ENCODE measurements at regions of chr17 and their contacts with region 1.

Region 1: GRCh38 chr17:42221937-42222745 is 27.8 kb upstream of the GHDC start:
- DNase-seq: peak; percentile 78 to 90 (median 86)
- H3K4me3 ChIP-seq: no peak overlapping the region
- H3K27ac ChIP-seq: no peak overlapping the region
- H3K4me1 ChIP-seq: peaks cover 0 to 22% (median 3%) of the 10 kb centered on the region in 4 experiments
- H3K27me3 ChIP-seq: no peaks in the 10 kb centered on the region

Region 2: GRCh38 chr17:41937970-41938954 is 283.9 kb before region 1 on chr17:
- CTCF ChIA-PET with region 1: no interaction called
- POLR2A ChIA-PET with region 1: no interaction called
- DNase-seq: peak; percentile 50 to 85 (median 66)
- H3K4me3 ChIP-seq: no peak overlapping the region
- H3K27ac ChIP-seq: no peak overlapping the region
- H3K4me1 ChIP-seq: peaks cover 0 to 6% (median 1%) of the 10 kb centered on the region in 4 experiments
- H3K27me3 ChIP-seq: no peaks in the 10 kb centered on the region

Region 3: DNA sequence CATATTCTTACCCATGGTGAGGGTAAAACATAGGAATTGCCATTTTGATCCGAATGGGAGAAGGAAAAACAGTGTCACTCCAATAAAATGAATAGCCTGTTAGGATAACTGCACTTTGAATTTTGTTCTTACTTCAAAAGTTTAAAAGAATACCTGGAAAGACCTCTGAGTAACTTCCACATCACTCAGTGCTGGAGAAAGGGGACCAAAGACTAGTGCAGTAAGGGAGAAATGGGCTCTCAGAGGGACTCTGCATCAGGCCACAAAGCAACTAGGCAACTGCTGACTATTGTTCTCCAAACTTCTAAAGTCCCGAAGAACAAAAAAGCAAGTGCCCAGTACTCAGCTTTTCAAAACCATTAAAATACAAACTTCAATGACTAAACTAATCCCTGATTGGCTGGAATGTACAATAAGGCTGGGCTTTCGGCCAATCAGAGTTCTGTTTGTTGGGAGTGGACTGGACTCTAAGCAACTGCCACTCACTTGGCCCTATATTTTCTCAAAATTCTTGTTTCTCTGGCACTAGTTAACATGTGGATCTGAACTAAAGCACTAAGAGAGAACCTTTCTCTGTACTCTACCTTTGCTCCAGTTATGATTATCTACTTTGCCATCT is 211.1 kb before region 1 on chr17:
- CTCF ChIA-PET with region 1: no interaction called
- POLR2A ChIA-PET with region 1: no interaction called
- DNase-seq: peak in 2 of 3 donors; percentile 33 to 39
- H3K4me3 ChIP-seq: no peak overlapping the region
- H3K27ac ChIP-seq: peak overlapping the region in 1 of 2 experiments; percentile 12
- H3K4me1 ChIP-seq: peaks cover 3 to 17% (median 10%) of the 10 kb centered on the region in 4 experiments
- H3K27me3 ChIP-seq: no peaks in the 10 kb centered on the region

Region 4: DNA sequence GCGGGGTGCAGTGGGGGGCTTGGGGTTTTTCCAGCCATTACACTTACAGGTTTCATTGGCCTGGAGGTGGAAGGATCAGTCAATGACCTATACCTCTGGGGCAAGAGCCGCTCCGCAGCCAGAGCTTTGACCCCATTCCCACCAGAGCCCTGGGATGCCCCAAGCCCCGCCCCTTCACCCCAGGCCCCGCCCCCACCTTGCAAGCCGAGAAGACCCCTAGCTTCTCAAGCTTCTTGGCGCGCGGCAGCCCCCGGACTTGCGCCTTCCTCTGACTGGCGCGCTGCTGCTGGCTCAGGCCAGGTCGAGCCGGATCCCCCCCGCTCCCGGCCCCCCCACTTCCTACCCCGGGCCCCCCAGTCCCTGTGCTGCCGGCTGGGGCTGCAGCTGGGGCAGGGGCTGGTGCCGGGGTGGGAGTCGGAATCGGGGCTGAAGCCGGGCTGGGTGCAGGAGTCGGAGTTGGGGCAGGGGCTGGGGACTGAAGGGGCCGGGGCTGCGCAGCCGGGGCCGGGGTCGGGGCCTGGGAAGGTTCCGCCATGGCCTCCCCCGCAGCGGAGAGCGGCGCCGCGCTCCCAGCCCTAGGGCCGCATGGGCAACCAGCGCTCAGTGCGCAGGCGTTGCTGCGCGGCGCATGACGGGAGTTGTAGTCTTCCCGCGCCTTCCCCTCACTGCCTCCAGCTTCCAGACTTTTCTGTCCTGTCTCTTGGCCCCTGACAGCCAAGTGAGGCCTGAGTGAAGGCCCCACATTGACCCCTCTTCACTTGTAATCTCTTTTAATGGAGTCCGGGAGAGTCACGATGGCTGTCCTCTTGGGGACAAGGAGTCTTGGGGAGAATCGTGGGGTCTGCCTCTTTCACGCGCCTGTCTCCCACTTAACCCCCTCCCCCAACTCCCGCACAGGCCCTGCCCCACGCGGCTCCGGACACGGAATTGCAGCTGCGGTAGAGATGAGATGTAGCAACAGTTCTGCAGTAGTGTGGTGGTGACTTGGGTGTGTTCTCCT is 101.1 kb before region 1 on chr17 and contains the start of gene KAT2A:
- CTCF ChIA-PET with region 1: no interaction called
- POLR2A ChIA-PET with region 1: no interaction called
- DNase-seq: peak; percentile 56 to 77 (median 69)
- H3K4me3 ChIP-seq: peak within 1 kb of the TSS; percentile 8 to 72 (median 57)
- H3K27ac ChIP-seq: peak within 1 kb of the TSS in 1 of 2 experiments; percentile 54
- H3K4me1 ChIP-seq: peaks cover 0 to 15% (median 13%) of the 10 kb centered on the region in 4 experiments
- H3K27me3 ChIP-seq: no peaks in the 10 kb centered on the region

Region 5: GRCh38 chr17:42153919-42154742 is 68.0 kb before region 1 on chr17:
- CTCF ChIA-PET with region 1: no interaction called
- POLR2A ChIA-PET with region 1: no interaction called
- DNase-seq: peak; percentile 53 to 63 (median 61)
- H3K4me3 ChIP-seq: peak overlapping the region; percentile 73 to 98 (median 95)
- H3K27ac ChIP-seq: peak overlapping the region; percentile 92 to 95
- H3K4me1 ChIP-seq: peaks cover 8 to 15% (median 14%) of the 10 kb centered on the region in 4 experiments
- H3K27me3 ChIP-seq: no peaks in the 10 kb centered on the region

Region 6: DNA sequence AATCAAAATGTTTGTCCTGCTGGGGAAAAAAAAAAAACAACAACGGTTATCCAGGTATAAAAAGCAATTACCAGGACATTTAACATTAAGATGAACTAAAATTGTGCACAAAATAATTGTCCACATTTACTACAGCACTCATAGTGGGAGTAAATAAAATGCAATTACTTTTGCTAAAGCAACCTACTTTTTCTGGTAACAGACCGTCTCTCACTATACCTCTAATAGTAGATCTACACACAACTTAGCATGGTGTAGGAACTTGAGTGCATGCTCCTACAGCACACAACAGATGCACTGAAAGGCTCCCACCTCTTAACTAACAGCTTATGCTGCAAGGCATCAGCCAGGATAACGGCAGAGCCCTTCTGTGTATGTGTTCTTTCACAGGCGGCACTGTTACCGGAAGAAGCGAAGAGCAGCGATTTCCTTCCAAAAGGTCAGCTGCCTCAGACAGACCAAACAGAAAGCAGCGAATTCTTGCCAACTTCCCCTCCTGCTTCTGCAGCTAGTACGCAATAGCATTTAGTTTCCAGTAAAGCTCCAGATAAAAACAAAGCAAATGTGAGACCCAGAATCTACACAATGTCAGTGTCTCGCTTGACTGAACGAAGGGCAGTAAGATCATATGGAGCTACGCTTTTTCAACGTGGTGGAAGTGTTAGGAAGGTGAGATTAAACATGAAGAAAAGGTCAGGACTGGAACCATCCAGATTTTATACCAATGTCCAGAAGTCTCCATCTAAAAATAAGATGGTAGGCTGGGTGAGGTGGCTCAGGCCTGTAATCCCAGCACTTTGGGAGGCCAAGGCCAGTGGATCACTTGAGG is 26.4 kb after region 1 on chr17:
- CTCF ChIA-PET with region 1: interaction called, 66 read pairs
- POLR2A ChIA-PET with region 1: no interaction called
- DNase-seq: peak; percentile 90 to 97 (median 96)
- H3K4me3 ChIP-seq: peak overlapping the region in 6 of 7 experiments; percentile 37 to 65 (median 56)
- H3K27ac ChIP-seq: peak overlapping the region; percentile 36 to 82
- H3K4me1 ChIP-seq: peaks cover 28 to 77% (median 52%) of the 10 kb centered on the region in 4 experiments
- H3K27me3 ChIP-seq: no peaks in the 10 kb centered on the region

Region 7: GRCh38 chr17:42282478-42283320 is 60.6 kb after region 1 on chr17:
- CTCF ChIA-PET with region 1: interaction called, 25 read pairs
- POLR2A ChIA-PET with region 1: interaction called, 30 read pairs
- DNase-seq: no peak
- H3K4me3 ChIP-seq: no peak overlapping the region
- H3K27ac ChIP-seq: no peak overlapping the region
- H3K4me1 ChIP-seq: peaks cover 2 to 25% (median 24%) of the 10 kb centered on the region in 4 experiments
- H3K27me3 ChIP-seq: no peaks in the 10 kb centered on the region

Region 8: DNA sequence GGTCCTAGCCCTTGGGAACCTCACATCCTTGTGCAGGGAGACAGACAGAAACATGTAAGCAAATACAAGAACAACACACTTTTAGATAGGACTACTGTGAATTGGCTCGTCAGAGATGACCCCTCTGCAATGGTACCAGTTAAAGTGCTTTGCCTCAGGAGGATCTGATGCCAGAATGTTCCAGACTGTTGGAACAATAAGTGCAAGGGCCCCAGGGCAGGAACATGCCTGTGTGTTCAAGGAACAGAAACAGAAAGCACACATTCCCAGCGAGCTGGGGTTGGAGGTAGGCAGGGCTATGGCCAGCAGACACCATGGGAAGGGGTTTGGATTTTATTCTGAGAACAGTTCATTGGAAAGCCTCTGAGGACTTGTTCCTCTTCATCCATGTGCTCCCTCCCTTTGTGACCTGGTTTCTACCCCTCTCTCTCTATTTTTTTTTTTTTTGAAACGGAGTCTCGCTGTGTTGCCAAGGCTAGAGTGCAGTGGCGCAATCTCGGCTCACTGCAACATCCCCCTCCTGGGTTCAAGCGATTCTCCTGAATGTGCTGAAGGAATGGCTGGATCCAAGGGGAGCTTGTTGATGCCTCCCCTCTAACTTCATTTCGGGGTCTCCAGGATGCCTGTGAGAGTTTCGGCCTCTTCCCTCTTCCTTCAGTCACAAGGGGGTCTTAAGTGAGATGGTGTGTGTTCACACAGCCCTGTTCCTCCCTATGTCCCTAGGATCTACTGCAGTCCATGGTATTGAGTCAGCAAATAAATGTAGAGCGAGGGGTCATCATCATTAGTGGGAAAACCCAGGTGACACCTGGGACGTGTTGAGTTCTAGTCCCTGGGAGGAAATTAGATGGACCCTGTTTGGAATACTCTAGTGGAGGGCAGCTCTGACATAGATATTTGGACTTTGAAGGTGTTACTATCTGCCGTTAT is 72.6 kb after region 1 on chr17:
- CTCF ChIA-PET with region 1: interaction called, 18 read pairs
- POLR2A ChIA-PET with region 1: interaction called, 30 read pairs
- DNase-seq: no peak
- H3K4me3 ChIP-seq: no peak overlapping the region
- H3K27ac ChIP-seq: peak overlapping the region in 1 of 2 experiments; percentile 4
- H3K4me1 ChIP-seq: peaks cover 0 to 12% (median 10%) of the 10 kb centered on the region in 4 experiments
- H3K27me3 ChIP-seq: no peaks in the 10 kb centered on the region

Region 9: DNA sequence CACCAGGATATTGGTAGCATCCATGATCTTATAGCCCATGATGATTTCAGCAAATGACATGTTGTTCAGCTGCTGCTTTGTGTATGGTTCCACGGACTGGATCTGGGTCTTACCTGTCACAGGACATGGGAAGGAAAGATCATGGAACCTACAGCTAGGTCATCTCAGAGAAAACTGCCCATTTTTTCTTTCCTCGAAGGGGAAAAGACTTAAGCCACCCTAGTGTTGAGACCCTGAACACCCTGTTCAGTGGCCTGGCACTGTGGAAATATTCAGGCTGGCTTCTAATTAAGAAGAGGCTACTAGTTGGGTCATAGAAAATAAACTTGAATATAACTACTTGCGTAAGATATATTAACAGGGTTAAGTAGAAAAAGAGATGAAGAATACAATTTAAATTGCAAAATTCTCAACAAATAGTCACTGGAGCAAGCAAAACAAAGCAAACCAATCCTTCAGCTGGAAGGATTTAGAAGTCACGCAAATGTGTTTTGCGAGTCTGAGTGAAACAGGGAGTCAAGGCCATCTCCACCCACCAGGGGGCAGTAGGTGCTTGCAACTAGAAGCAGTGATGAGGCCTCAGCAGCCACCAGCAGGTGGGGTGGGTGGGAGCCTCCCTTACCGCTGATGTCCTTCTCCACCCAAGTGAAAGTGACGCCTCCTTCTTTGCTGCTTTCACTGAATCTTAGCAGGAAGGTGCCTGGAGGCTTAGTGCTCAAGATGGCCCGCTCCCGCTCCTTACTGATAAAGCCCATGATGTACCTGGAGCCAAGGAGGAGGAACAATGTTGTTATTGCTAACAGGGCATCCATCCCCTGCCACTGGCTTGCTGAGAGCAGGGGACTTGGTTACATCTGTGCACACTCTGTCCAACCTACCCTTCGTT is 100.5 kb after region 1 on chr17:
- CTCF ChIA-PET with region 1: interaction called, 10 read pairs
- POLR2A ChIA-PET with region 1: no interaction called
- DNase-seq: peak; percentile 96 to 98 (median 97)
- H3K4me3 ChIP-seq: peak overlapping the region in 2 of 7 experiments; percentile 19 to 38
- H3K27ac ChIP-seq: peak overlapping the region; percentile 98 to 99
- H3K4me1 ChIP-seq: peaks cover 24 to 56% (median 55%) of the 10 kb centered on the region in 4 experiments
- H3K27me3 ChIP-seq: no peaks in the 10 kb centered on the region